Activated CD4-positive, alpha-beta T cell treated with anti-CD3 and anti-CD28 coated beads for 36 hours (primary cell): ENCODE measurements at regions of chr11 and their contacts with region 1.

Region 1: GRCh38 chr11:46700241-46701077 is at the starts of genes ARHGAP1 and ZNF408:
- DNase-seq: peak; percentile 100
- ATAC-seq: peak; percentile 95
- H3K4me3 Mint-ChIP-seq: peak within 1 kb of the TSS; percentile 82
- H3K27ac Mint-ChIP-seq: peak within 1 kb of the TSS; percentile 96
- H3K4me1 Mint-ChIP-seq: peaks cover 42% of the 10 kb centered on the region
- H3K27me3 Mint-ChIP-seq: no peaks in the 10 kb centered on the region
- total RNA-seq, gene ARHGAP1: 40.2 to 50.0 TPM
- total RNA-seq, gene ZNF408: 8.8 to 9.0 TPM

Region 2: GRCh38 chr11:45917623-45918330 is 782.7 kb before region 1 on chr11 and contains the start of gene PEX16:
- CTCF ChIA-PET with region 1: no interaction called
- POLR2A ChIA-PET with region 1: no interaction called
- intact Hi-C with region 1: loop called in 1 of 2 experiments (anchors 1 kb)
- DNase-seq: peak; percentile 97
- ATAC-seq: peak; percentile 94
- H3K4me3 Mint-ChIP-seq: peak within 1 kb of the TSS; percentile 96
- H3K27ac Mint-ChIP-seq: peak within 1 kb of the TSS; percentile 95
- H3K4me1 Mint-ChIP-seq: peaks cover 31% of the 10 kb centered on the region
- H3K27me3 Mint-ChIP-seq: peaks cover 3% of the 10 kb centered on the region
- total RNA-seq, gene PEX16: 28.1 to 33.4 TPM

Region 3: GRCh38 chr11:46392421-46393230 is 307.8 kb before region 1 on chr11:
- CTCF ChIA-PET with region 1: interaction called, 3 read pairs
- POLR2A ChIA-PET with region 1: no interaction called
- intact Hi-C with region 1: loop called in 1 of 2 experiments (anchors 2 kb)
- DNase-seq: peak; percentile 89
- ATAC-seq: peak; percentile 76
- H3K4me3 Mint-ChIP-seq: peak overlapping the region; percentile 61
- H3K27ac Mint-ChIP-seq: no peak overlapping the region
- H3K4me1 Mint-ChIP-seq: peaks cover 22% of the 10 kb centered on the region
- H3K27me3 Mint-ChIP-seq: peaks cover 37% of the 10 kb centered on the region

Region 4: DNA sequence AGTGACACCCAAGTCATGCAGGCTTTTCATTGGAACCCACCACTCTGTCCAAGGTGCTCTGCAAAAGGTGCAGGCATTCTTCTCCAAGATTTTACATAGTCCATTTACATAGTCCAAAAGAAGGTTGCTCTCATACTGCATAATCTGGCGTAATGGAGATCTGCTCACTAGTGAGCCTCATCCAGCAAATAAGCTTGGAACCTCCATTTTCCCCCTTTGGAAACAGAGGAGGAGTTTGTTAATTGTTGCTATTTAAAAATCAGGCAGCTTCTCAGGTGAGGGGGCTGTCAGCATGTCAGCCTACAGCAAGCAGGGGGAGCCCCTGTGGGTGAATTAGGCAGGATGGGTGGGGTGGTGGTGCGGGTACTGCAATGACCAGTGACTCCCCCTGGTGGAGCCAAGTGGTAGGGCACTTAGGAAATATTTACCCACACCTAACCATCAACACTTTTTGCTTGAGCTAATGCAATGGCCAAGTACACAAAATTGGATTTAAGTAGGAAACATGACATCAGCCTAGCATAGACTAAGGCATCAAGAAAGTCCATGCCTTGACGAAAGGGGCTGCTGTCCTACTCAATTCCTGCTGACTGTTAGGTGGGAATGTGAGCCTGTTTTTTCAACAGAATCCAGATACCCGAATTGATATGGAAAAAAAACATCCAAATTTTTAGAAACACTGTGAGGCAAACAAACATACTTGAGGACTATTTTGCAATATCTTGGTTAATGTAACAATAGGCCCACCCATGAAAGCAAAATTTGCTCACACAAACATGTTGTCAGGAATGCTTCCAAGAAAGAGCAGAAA is 171.2 kb before region 1 on chr11:
- CTCF ChIA-PET with region 1: no interaction called
- POLR2A ChIA-PET with region 1: no interaction called
- intact Hi-C with region 1: no loop called
- DNase-seq: peak; percentile 89
- ATAC-seq: peak; percentile 92
- H3K4me3 Mint-ChIP-seq: peak overlapping the region; percentile 5
- H3K27ac Mint-ChIP-seq: peak overlapping the region; percentile 32
- H3K4me1 Mint-ChIP-seq: peaks cover 29% of the 10 kb centered on the region
- H3K27me3 Mint-ChIP-seq: no peaks in the 10 kb centered on the region

Region 5: DNA sequence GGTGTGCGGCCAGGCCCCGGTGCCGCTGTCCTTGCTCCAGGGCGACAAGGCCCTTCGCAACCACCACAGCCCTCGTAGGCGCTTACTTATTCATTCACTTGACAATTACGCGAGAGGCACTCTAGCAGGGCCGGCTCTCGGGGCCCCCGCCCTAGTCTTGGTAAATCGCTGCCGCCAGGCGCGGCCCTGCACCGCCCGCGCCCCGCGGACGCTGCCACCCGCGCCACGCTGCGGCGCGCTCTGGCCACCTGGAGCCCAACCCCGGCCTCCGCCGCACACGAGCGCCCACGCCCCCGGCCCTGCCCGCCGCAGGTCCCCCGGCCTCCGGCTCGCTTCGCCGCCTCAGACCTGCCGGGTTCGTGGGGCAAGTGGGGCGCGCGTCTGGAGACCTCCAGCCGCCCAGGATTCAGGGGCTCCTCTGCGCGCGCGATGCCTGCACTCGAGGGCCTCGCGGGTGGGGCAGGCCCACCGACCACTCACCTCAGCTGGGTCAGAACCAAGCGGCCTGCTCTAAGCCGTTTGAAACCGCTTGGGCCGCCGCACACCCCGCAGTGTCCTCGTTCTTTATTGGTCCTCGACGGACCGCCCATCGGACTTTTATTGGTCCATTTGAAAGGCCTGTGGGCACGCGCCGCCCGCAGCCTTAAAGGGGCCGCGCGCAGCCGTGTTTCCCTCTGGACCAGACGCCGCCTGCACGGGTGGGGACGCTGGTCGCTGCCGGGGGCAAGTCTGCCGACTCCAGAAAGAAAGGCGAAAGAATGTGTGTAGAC is 145.5 kb after region 1 on chr11 and contains the start of gene CKAP5:
- CTCF ChIA-PET with region 1: no interaction called
- POLR2A ChIA-PET with region 1: no interaction called
- intact Hi-C with region 1: loop called in 1 of 2 experiments (anchors 1 kb)
- DNase-seq: peak; percentile 92
- ATAC-seq: peak; percentile 92
- H3K4me3 Mint-ChIP-seq: peak within 1 kb of the TSS; percentile 86
- H3K27ac Mint-ChIP-seq: peak within 1 kb of the TSS; percentile 94
- H3K4me1 Mint-ChIP-seq: peaks cover 30% of the 10 kb centered on the region
- H3K27me3 Mint-ChIP-seq: no peaks in the 10 kb centered on the region
- total RNA-seq, gene CKAP5: 166 to 183 TPM

Region 6: DNA sequence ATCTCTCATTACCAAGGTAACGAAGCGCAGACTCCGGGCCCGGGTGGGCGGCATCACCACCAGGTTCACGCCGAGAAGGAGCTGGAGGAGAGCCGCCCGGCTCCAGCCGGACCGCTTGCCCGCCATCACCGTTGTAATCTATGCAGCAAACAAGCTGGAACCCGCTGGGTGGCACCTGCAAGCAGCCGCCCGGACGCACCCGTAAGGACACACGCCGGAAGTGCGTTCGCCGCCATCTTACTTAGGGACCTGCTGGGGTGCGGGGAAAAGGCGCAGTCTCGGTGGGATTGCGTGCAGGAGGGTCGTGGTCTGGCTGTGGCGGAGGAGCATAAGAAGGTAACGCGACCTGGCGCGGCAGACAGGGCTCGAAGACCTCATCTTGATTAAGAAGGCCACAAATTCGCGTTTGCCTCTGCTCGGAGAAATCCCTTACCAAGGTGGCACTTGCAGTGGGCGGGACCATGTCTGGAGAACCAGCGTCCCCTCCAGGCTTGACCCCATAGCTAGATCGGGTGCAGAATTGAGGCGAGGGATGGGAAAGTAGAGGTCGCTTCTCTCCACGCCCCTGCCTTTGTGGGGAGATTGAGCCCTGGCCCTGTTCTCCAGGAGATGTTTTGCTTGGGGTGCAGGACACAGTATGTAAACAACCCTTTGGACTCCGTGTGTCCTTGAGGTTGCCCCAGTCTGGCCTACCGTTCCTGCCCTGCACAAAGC is 548.4 kb after region 1 on chr11 and contains the start of gene ACP2:
- CTCF ChIA-PET with region 1: no interaction called
- POLR2A ChIA-PET with region 1: interaction called, 6 read pairs
- intact Hi-C with region 1: loop called in 1 of 2 experiments (anchors 1 kb)
- DNase-seq: peak; percentile 94
- ATAC-seq: peak; percentile 97
- H3K4me3 Mint-ChIP-seq: peak within 1 kb of the TSS; percentile 78
- H3K27ac Mint-ChIP-seq: peak within 1 kb of the TSS; percentile 95
- H3K4me1 Mint-ChIP-seq: peaks cover 22% of the 10 kb centered on the region
- H3K27me3 Mint-ChIP-seq: no peaks in the 10 kb centered on the region
- total RNA-seq, gene ACP2: 10.2 to 11.2 TPM

Region 7: GRCh38 chr11:47552566-47553416 is 852.3 kb after region 1 on chr11 and contains the start of gene CELF1:
- CTCF ChIA-PET with region 1: no interaction called
- POLR2A ChIA-PET with region 1: no interaction called
- intact Hi-C with region 1: loop called in 1 of 2 experiments (anchors 2 kb)
- DNase-seq: peak; percentile 97
- ATAC-seq: peak; percentile 94
- H3K4me3 Mint-ChIP-seq: peak within 1 kb of the TSS; percentile 96
- H3K27ac Mint-ChIP-seq: peak within 1 kb of the TSS; percentile 94
- H3K4me1 Mint-ChIP-seq: peaks cover 38% of the 10 kb centered on the region
- H3K27me3 Mint-ChIP-seq: no peaks in the 10 kb centered on the region
- total RNA-seq, gene CELF1: 132 to 143 TPM